Activated T-helper 2 cell treated with anti-CD3 and anti-CD28 coated beads, Interferon-gamma antibody, Interleukin-2, Interleukin-4, amounts not matched to agents 10 μg/mL and 5 μg/mL and 100 μg/mL, durations not matched to agents 14 hours and 24 hours and 36 hours (primary cell): ENCODE measurements at regions of chr1 and their contacts with region 1.

Region 1: GRCh38 chr1:99751877-99752504 is 14.4 kb downstream of the FRRS1 start:
- DNase-seq: no peak
- H3K4me3 Mint-ChIP-seq: no peak overlapping the region
- H3K27ac Mint-ChIP-seq: no peak overlapping the region
- H3K4me1 Mint-ChIP-seq: peaks cover 19% of the 10 kb centered on the region
- H3K27me3 Mint-ChIP-seq: no peaks in the 10 kb centered on the region

Region 2: GRCh38 chr1:99786751-99787501 is 34.9 kb after region 1 on chr1:
- intact Hi-C with region 1: loop called (anchors 5 kb)
- DNase-seq: no peak
- H3K4me3 Mint-ChIP-seq: no peak overlapping the region
- H3K27ac Mint-ChIP-seq: no peak overlapping the region
- H3K4me1 Mint-ChIP-seq: peaks cover 23% of the 10 kb centered on the region
- H3K27me3 Mint-ChIP-seq: peaks cover 50% of the 10 kb centered on the region